ENCODE measurements at regions of chr3 and their contacts with region 1.

Region 1: DNA sequence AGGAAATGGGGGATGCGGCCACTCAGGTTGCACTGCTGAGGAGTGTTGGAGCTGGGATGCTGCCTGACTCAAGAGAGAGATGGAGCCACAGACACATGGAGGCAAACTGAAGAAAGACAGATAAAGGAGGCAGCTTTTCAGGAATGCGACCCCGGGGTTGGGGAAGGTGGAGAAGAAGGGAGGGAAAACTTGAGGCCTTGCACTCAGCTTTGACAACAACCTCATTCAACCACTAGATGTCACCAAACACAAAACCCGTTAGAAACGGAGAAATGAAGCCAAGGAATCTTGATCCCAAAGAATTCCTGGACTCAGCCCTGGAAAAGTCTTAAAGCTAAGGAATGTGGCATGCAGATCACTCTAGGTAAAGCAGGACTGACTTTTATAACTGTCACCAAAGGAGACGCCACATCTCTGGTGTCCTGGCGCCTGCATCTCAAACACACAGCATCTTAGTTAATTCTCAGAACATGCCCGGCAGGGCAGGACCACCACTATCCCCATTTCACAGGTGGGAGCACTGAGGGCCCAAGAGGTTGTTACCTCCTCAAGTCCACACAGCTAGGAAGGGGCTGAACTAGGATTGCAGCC is 59.6 kb upstream of the LMCD1 start:
- DNase-seq: peak in 1 of 3 donors; percentile 42
- ATAC-seq: peak; percentile 20
- H3K4me3 ChIP-seq: no peak overlapping the region
- H3K4me1 ChIP-seq: peaks cover 10% of the 10 kb centered on the region
- CTCF ChIP-seq: peak; percentile 38

Region 2: DNA sequence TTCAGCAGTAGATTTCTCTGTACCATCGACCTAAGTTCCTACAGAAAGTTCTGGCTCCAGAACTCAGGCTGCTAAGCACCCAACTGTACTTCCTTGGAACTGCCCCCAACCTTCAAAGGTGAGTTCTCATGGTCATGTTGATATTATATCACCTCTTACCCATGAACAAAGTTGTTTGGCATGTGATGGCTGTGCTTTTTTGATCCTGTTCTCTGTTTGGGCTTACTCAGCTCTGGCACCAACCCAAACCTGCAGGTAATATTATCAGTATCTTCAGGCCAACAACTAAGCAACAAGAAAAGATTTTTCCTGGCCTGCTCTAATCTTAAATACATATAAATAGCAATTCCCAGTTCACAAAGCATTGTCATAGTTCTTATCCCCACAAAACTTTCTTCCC is 259.2 kb before region 1 on chr3:
- intact Hi-C with region 1: no loop called
- DNase-seq: no peak
- ATAC-seq: no peak
- H3K4me3 ChIP-seq: no peak overlapping the region
- H3K4me1 ChIP-seq: no peaks in the 10 kb centered on the region
- CTCF ChIP-seq: no peak

Region 3: DNA sequence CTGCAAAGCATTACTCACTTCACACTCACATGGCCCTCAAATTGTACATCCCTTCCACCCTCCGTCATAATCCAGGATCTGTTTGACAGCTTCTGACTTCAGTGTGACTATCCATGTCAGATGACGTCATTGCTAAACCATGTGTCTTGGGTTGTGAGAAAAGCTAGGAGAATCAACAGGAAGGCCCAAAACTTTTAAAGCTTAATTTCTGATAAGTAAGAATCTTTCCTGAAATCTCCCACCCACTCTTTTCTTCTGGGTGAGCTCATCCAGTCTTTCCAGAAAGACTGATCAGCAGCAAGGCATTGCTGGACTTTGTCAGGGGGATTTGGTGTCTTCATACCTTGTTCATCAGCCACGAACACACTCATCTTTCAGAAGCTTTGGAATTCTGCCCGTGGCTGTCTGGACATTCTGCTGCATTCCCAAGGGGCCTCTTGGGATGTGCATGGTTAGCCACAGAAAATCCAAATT is 48.1 kb after region 1 on chr3:
- intact Hi-C with region 1: no loop called
- DNase-seq: no peak
- ATAC-seq: no peak
- H3K4me3 ChIP-seq: no peak overlapping the region
- H3K4me1 ChIP-seq: no peaks in the 10 kb centered on the region
- CTCF ChIP-seq: no peak

Region 4: GRCh38 chr3:8501371-8502131 is 59.5 kb after region 1 on chr3 and contains the start of gene LMCD1:
- intact Hi-C with region 1: loop called in 1 of 2 experiments (anchors 10 kb)
- DNase-seq: peak; percentile 92 to 96 (median 95)
- ATAC-seq: peak; percentile 96
- H3K4me3 ChIP-seq: peak within 1 kb of the TSS; percentile 11
- H3K4me1 ChIP-seq: peaks cover 21% of the 10 kb centered on the region
- CTCF ChIP-seq: no peak
- total RNA-seq, gene LMCD1: 5.1 to 9.7 (median 7.2) TPM

Region 5: GRCh38 chr3:8622873-8623691 is 181.0 kb after region 1 on chr3:
- intact Hi-C with region 1: loop called in 1 of 2 experiments (anchors 5 kb)
- DNase-seq: peak in 2 of 3 donors; percentile 76 to 81
- ATAC-seq: peak; percentile 87
- H3K4me3 ChIP-seq: no peak overlapping the region
- H3K4me1 ChIP-seq: no peaks in the 10 kb centered on the region
- CTCF ChIP-seq: peak; percentile 80

Region 6: GRCh38 chr3:8837162-8837561 is 395.1 kb after region 1 on chr3:
- intact Hi-C with region 1: no loop called
- DNase-seq: no peak
- ATAC-seq: no peak
- H3K4me3 ChIP-seq: no peak overlapping the region
- H3K4me1 ChIP-seq: no peaks in the 10 kb centered on the region
- CTCF ChIP-seq: no peak

Measured in mucosa of descending colon (tissue), 3 donors.